H1 (cell line): ENCODE measurements at regions of chr3 and their contacts with region 1.

Region 1: DNA sequence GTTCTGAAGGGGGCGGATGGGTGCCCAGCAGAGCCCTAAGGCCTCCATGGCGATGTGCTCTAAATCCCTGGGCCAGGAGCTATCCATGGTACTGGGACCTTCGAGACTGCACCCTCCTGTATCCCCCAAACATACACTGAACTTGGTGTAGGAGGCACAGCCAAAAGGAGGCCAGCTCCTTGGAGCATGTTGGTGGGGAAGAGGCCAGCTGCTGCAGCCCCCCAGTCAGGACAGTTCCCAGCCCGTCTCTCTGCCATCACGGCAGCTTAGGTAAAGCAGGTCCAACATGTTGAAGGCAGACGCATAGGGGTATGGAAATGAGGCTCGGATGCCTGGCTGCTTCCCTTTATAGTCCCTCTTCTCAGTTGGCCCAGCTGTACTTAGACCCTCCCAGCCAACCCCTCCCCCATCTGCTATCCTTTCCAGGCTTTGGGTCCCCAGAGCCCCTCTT is 1.8 kb downstream of the CAMKV start:
- DNase-seq: peak in 1 of 2 experiments; percentile 86
- H3K4me3 ChIP-seq: peak overlapping the region in 1 of 4 experiments; percentile 66; a peak in 3 of 8 replicates
- H3K27ac ChIP-seq: no peak overlapping the region
- H3K4me1 ChIP-seq: peaks cover 11 to 47% (median 32%) of the 10 kb centered on the region in 4 experiments
- H3K27me3 ChIP-seq: peaks cover 0 to 5% (median 3%) of the 10 kb centered on the region in 4 experiments; a peak in 2 of 7 replicates
- CTCF ChIP-seq: no peak
- EP300 ChIP-seq: no peak
- POLR2A ChIP-seq: no peak
- RAD21 ChIP-seq: peak in 1 of 2 experiments; percentile 11; a peak in 1 of 4 replicates

Region 2: DNA sequence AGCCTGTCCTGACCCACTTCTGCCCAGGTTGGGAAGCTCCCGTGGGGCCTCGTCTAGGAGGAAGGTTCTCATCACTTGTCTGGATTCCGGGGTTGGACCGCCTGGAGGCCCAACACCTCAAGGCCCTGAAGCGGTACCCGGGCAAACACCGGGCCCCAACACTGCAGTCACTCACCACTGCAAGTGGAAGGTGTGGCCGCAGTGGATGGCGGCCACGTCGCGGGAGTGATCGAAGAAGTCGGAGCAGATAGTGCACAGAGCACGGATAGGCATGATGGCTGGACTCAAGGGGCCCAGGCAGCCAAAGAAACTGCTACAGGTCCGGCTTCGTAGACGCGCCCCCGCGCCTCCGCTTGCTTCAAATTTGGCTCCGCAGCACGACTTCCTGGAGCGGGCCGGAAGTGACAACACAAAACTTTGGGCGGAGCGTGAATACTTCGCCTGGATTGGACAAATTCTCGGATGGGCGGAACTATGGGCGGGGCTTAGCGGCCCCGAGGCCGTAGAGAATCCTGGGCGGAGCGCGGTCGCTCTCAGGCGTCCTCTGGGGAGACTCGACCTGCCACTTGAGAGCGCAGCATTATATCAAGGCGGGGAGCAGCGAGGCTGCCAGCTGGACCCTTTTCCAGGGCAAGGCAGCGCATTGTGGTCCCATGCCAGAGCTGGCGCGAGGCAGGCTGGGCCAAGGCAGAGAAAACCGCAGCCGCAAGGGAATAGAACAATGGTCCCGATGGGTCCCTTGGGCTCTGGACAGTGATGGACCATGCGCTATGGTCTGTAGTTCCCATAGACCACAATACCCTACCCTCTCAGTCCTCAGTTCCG is 11.5 kb before region 1 on chr3 and contains the start of gene TRAIP:
- CTCF ChIA-PET with region 1: interaction called, 3 read pairs
- POLR2A ChIA-PET with region 1: interaction called, 33 read pairs
- DNase-seq: peak; percentile 83 to 99
- H3K4me3 ChIP-seq: peak within 1 kb of the TSS; percentile 79 to 96 (median 84)
- H3K27ac ChIP-seq: peak within 1 kb of the TSS; percentile 13; the same call in 1 of the 2 replicates
- H3K4me1 ChIP-seq: peaks cover 0 to 7% (median 4%) of the 10 kb centered on the region in 4 experiments; a peak in 6 of 7 replicates
- H3K27me3 ChIP-seq: no peaks in the 10 kb centered on the region
- CTCF ChIP-seq: no peak
- EP300 ChIP-seq: no peak
- POLR2A ChIP-seq: peak in 1 of 2 experiments; percentile 91; a peak in 2 of 3 replicates
- RAD21 ChIP-seq: peak; percentile 7 to 10; a peak in 2 of 4 replicates
- total RNA-seq, gene TRAIP: 25.4 and 28.1 TPM in 2 replicates

Region 3: GRCh38 chr3:49882166-49882565 is 14.3 kb after region 1 on chr3:
- CTCF ChIA-PET with region 1: interaction called, 89 read pairs
- POLR2A ChIA-PET with region 1: interaction called, 149 read pairs
- DNase-seq: no peak
- H3K4me3 ChIP-seq: no peak overlapping the region
- H3K27ac ChIP-seq: no peak overlapping the region
- H3K4me1 ChIP-seq: peaks cover 10 to 22% (median 17%) of the 10 kb centered on the region in 4 experiments
- H3K27me3 ChIP-seq: no peaks in the 10 kb centered on the region
- CTCF ChIP-seq: no peak
- EP300 ChIP-seq: no peak
- POLR2A ChIP-seq: no peak
- RAD21 ChIP-seq: no peak

Region 4: GRCh38 chr3:49899815-49900214 is 31.9 kb after region 1 on chr3:
- CTCF ChIA-PET with region 1: interaction called, 32 read pairs
- POLR2A ChIA-PET with region 1: interaction called, 23 read pairs
- DNase-seq: peak in 1 of 2 experiments; percentile 64
- H3K4me3 ChIP-seq: no peak overlapping the region
- H3K27ac ChIP-seq: no peak overlapping the region
- H3K4me1 ChIP-seq: peaks cover 0 to 9% (median 8%) of the 10 kb centered on the region in 4 experiments; a peak in 6 of 7 replicates
- H3K27me3 ChIP-seq: peaks cover 0 to 3% (median 1%) of the 10 kb centered on the region in 4 experiments; a peak in 3 of 7 replicates
- CTCF ChIP-seq: peak in 2 of 3 experiments; percentile 73; a peak in 3 of 4 replicates
- EP300 ChIP-seq: no peak
- POLR2A ChIP-seq: no peak
- RAD21 ChIP-seq: peak; percentile 74 to 84

Region 5: GRCh38 chr3:49906004-49906743 is 38.3 kb after region 1 on chr3:
- CTCF ChIA-PET with region 1: interaction called, 32 read pairs
- POLR2A ChIA-PET with region 1: interaction called, 23 read pairs
- DNase-seq: peak in 1 of 2 experiments; percentile 77
- H3K4me3 ChIP-seq: peak overlapping the region in 1 of 4 experiments; percentile 10; a peak in 1 of 8 replicates
- H3K27ac ChIP-seq: no peak overlapping the region
- H3K4me1 ChIP-seq: peaks cover 2 to 43% (median 26%) of the 10 kb centered on the region in 4 experiments
- H3K27me3 ChIP-seq: peaks cover 0 to 20% (median 16%) of the 10 kb centered on the region in 4 experiments; a peak in 5 of 7 replicates
- CTCF ChIP-seq: peak in 2 of 3 experiments; percentile 89 to 90; a peak in 3 of 4 replicates
- EP300 ChIP-seq: no peak
- POLR2A ChIP-seq: no peak
- RAD21 ChIP-seq: peak; percentile 80 to 85

Region 6: GRCh38 chr3:49912881-49913281 is 45.0 kb after region 1 on chr3:
- CTCF ChIA-PET with region 1: interaction called, 12 read pairs
- POLR2A ChIA-PET with region 1: interaction called, 3 read pairs
- DNase-seq: no peak
- H3K4me3 ChIP-seq: no peak overlapping the region
- H3K27ac ChIP-seq: no peak overlapping the region
- H3K4me1 ChIP-seq: peaks cover 5 to 27% (median 16%) of the 10 kb centered on the region in 4 experiments
- H3K27me3 ChIP-seq: peaks cover 0 to 18% (median 14%) of the 10 kb centered on the region in 4 experiments; a peak in 5 of 7 replicates
- CTCF ChIP-seq: no peak
- EP300 ChIP-seq: no peak
- POLR2A ChIP-seq: no peak
- RAD21 ChIP-seq: no peak